ENCODE measurements at regions of chr22 and their contacts with region 1.

Region 1: DNA sequence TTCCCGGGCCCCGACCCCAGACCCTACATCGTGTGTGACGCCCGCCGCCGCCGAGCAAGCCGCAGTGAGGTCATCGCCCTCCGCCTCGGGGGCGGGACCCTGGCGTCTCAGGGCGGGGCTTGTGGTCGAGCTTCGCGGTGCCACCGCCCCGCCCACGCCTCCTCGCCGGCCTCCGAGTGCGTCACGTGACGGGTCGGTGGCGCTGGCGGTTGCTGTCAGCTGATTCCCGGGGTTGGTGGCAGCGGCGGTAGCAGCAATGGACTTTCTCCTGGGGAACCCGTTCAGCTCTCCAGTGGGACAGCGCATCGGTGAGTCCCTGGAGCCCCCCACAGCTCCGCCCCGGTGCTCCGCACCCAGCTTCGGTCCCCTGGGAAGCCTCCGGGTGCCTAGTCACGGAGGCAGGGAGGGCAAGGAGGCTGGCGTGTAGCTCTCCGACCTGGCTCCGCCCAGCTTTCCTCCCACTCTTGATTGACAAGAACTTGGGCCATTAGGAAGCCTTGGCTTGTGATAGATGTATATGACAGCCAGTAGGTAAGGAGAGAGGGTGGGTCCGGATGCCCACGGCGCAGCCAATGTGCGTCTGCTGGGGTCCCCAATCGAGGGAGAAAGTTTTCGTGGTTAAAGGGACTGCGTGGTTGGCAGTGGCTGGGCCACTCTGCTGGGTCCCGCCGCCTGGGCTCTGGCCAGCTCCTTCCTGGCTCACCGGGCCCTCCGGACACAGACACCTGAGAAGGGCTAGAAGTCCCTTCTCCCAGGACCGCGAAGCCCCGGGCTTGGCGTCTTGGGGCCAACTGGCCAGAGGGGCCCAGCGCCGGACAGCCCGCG is at the start of gene TOM1:
- DNase-seq: peak; percentile 96
- H3K4me3 Mint-ChIP-seq: peak within 1 kb of the TSS; percentile 83
- H3K27ac Mint-ChIP-seq: peak within 1 kb of the TSS; percentile 87
- H3K4me1 Mint-ChIP-seq: peaks cover 32% of the 10 kb centered on the region
- H3K27me3 Mint-ChIP-seq: no peaks in the 10 kb centered on the region
- total RNA-seq, gene TOM1: 29.8 to 31.1 TPM

Region 2: GRCh38 chr22:35257321-35258190 is 42.3 kb before region 1 on chr22 and contains the start of gene HMGXB4:
- CTCF ChIA-PET with region 1: no interaction called
- POLR2A ChIA-PET with region 1: interaction called, 19 read pairs
- intact Hi-C with region 1: loop called (anchors 2 kb)
- DNase-seq: peak; percentile 90
- H3K4me3 Mint-ChIP-seq: peak within 1 kb of the TSS; percentile 90
- H3K27ac Mint-ChIP-seq: peak within 1 kb of the TSS; percentile 89
- H3K4me1 Mint-ChIP-seq: peaks cover 27% of the 10 kb centered on the region
- H3K27me3 Mint-ChIP-seq: no peaks in the 10 kb centered on the region
- total RNA-seq, gene HMGXB4: 33.9 to 35.7 TPM

Region 3: GRCh38 chr22:35313311-35314121 is 13.6 kb after region 1 on chr22:
- CTCF ChIA-PET with region 1: interaction called, 5 read pairs
- POLR2A ChIA-PET with region 1: interaction called, 5 read pairs
- intact Hi-C with region 1: loop called (anchors 1 kb)
- DNase-seq: peak; percentile 70
- H3K4me3 Mint-ChIP-seq: no peak overlapping the region
- H3K27ac Mint-ChIP-seq: peak overlapping the region; percentile 56
- H3K4me1 Mint-ChIP-seq: peaks cover 73% of the 10 kb centered on the region
- H3K27me3 Mint-ChIP-seq: no peaks in the 10 kb centered on the region

Region 4: DNA sequence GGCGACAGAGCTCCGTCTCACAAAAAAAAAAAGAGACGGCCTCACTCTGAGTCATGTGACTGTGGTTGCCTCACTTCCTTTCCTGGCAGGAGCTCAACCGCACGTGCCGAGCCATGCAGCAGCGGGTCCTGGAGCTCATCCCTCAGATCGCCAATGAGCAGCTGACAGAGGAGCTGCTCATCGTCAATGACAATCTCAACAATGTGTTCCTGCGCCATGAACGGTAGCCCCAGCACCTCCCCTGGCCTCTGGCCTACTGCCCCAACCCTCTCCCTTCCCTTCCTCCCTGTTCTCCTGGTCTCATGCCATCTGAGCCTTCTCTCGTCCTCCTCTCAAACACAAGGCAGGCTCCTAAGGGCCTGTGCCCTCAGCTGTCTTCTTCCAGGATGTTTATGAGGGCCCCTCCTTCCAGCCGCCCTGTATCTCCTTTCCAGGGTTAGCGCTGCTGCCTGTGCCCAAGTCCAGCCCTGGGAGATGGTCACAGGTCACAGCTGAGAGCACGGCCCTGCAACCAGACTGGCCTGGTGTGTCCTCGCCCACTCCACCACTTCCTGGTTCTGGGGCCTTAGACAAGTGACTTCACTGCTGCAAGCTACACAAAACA is 30.5 kb after region 1 on chr22:
- CTCF ChIA-PET with region 1: interaction called, 9 read pairs
- POLR2A ChIA-PET with region 1: interaction called, 5 read pairs
- intact Hi-C with region 1: loop called (anchors 2 kb)
- DNase-seq: peak; percentile 87
- H3K4me3 Mint-ChIP-seq: peak overlapping the region; percentile 83
- H3K27ac Mint-ChIP-seq: peak overlapping the region; percentile 93
- H3K4me1 Mint-ChIP-seq: peaks cover 46% of the 10 kb centered on the region
- H3K27me3 Mint-ChIP-seq: no peaks in the 10 kb centered on the region

Region 5: GRCh38 chr22:35399678-35400334 is 99.9 kb after region 1 on chr22 and contains the start of gene MCM5:
- CTCF ChIA-PET with region 1: no interaction called
- POLR2A ChIA-PET with region 1: no interaction called
- intact Hi-C with region 1: loop called (anchors 10 kb)
- DNase-seq: peak; percentile 99
- H3K4me3 Mint-ChIP-seq: peak within 1 kb of the TSS; percentile 96
- H3K27ac Mint-ChIP-seq: peak within 1 kb of the TSS; percentile 97
- H3K4me1 Mint-ChIP-seq: peaks cover 29% of the 10 kb centered on the region
- H3K27me3 Mint-ChIP-seq: no peaks in the 10 kb centered on the region
- total RNA-seq, gene MCM5: 265 to 266 TPM

Measured in activated CD4-positive, alpha-beta memory T cell treated with anti-CD3 and anti-CD28 coated beads for 36 hours (primary cell).